ENCODE measurements at regions of chr18 and their contacts with region 1.

Region 1: GRCh38 chr18:10410472-10411308 is 43.7 kb upstream of the APCDD1 start:
- DNase-seq: no peak
- H3K4me3 ChIP-seq: no peak overlapping the region
- H3K27ac ChIP-seq: no peak overlapping the region
- H3K4me1 ChIP-seq: no peaks in the 10 kb centered on the region
- H3K27me3 ChIP-seq: no peaks in the 10 kb centered on the region
- CTCF ChIP-seq: no peak

Region 2: GRCh38 chr18:10378688-10379363 is 31.9 kb before region 1 on chr18:
- intact Hi-C with region 1: loop called (anchors 5 kb)
- DNase-seq: no peak
- H3K4me3 ChIP-seq: no peak overlapping the region
- H3K27ac ChIP-seq: no peak overlapping the region
- H3K4me1 ChIP-seq: no peaks in the 10 kb centered on the region
- H3K27me3 ChIP-seq: no peaks in the 10 kb centered on the region
- CTCF ChIP-seq: no peak

Region 3: GRCh38 chr18:10490401-10491165 is 79.9 kb after region 1 on chr18:
- intact Hi-C with region 1: no loop called
- DNase-seq: no peak
- H3K4me3 ChIP-seq: no peak overlapping the region
- H3K27ac ChIP-seq: no peak overlapping the region
- H3K4me1 ChIP-seq: no peaks in the 10 kb centered on the region
- H3K27me3 ChIP-seq: no peaks in the 10 kb centered on the region
- CTCF ChIP-seq: no peak

Measured in ascending aorta (tissue), 2 donors.